ENCODE measurements at regions of chr17 and their contacts with region 1.

Region 1: GRCh38 chr17:48131216-48131824 is 23.8 kb downstream of the SNX11 start:
- DNase-seq: peak; percentile 73
- H3K4me3 ChIP-seq: no peak overlapping the region
- H3K27ac ChIP-seq: no peak overlapping the region
- H3K4me1 ChIP-seq: no peaks in the 10 kb centered on the region
- H3K27me3 ChIP-seq: no peaks in the 10 kb centered on the region
- CTCF ChIP-seq: peak; percentile 62 to 79 (median 78)
- POLR2A ChIP-seq: no peak

Region 2: GRCh38 chr17:48084932-48085444 is 46.3 kb before region 1 on chr17:
- intact Hi-C with region 1: loop called (anchors 10 kb)
- DNase-seq: no peak
- H3K4me3 ChIP-seq: no peak overlapping the region
- H3K27ac ChIP-seq: no peak overlapping the region
- H3K4me1 ChIP-seq: no peaks in the 10 kb centered on the region
- H3K27me3 ChIP-seq: no peaks in the 10 kb centered on the region
- CTCF ChIP-seq: no peak
- POLR2A ChIP-seq: no peak

Measured in testis (tissue), 5 donors.